ENCODE measurements at regions of chrX and their contacts with region 1.

Region 1: DNA sequence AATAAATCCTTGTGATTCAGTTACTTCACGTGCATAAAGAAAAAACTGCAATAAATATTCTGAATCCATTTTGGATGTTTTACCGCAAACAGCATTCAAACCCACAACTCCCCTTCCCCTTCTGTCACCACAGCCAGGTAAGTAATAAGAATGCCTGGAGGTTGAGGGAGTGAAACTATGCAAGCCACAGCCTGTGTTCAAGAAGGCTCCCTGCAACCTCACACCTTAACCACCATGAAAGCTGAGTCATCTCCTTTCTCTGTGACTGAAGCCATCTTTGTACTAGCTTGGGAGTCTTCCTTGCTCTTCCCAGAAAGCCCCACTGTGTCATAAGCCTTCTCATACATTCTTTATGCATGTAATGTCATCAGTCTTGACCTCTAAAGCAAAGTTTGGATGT is 297.0 kb upstream of the PUDP start:
- DNase-seq: no peak
- H3K4me3 ChIP-seq: no peak overlapping the region
- CTCF ChIP-seq: no peak

Region 2: GRCh38 chrX:7409866-7410265 is 35.1 kb before region 1 on chrX:
- in situ Hi-C with region 1: loop called (anchors 5 kb)
- DNase-seq: no peak
- H3K4me3 ChIP-seq: no peak overlapping the region
- CTCF ChIP-seq: no peak

Region 3: GRCh38 chrX:7514871-7515599 is 70.1 kb after region 1 on chrX:
- in situ Hi-C with region 1: no loop called
- DNase-seq: no peak
- H3K4me3 ChIP-seq: no peak overlapping the region
- CTCF ChIP-seq: no peak

Region 4: GRCh38 chrX:7545564-7545963 is 100.6 kb after region 1 on chrX:
- in situ Hi-C with region 1: loop called (anchors 5 kb)
- DNase-seq: no peak
- H3K4me3 ChIP-seq: no peak overlapping the region
- CTCF ChIP-seq: no peak

Measured in astrocyte of the cerebellum (primary cell).